ENCODE measurements at regions of chr9 and their contacts with region 1.

Region 1: GRCh38 chr9:112971415-112971814 is 40.6 kb downstream of the ZNF883 start:
- DNase-seq: peak; percentile 50
- ATAC-seq: no peak
- H3K4me3 Mint-ChIP-seq: no peak overlapping the region
- H3K27ac Mint-ChIP-seq: no peak overlapping the region
- H3K4me1 Mint-ChIP-seq: no peaks in the 10 kb centered on the region
- H3K27me3 Mint-ChIP-seq: peaks cover 19% of the 10 kb centered on the region

Region 2: GRCh38 chr9:112844771-112845542 is 126.5 kb before region 1 on chr9:
- CTCF ChIA-PET with region 1: no interaction called
- POLR2A ChIA-PET with region 1: no interaction called
- intact Hi-C with region 1: loop called (anchors 1 to 10 kb)
- DNase-seq: peak; percentile 88
- ATAC-seq: peak; percentile 74
- H3K4me3 Mint-ChIP-seq: no peak overlapping the region
- H3K27ac Mint-ChIP-seq: no peak overlapping the region
- H3K4me1 Mint-ChIP-seq: peaks cover 18% of the 10 kb centered on the region
- H3K27me3 Mint-ChIP-seq: no peaks in the 10 kb centered on the region

Region 3: DNA sequence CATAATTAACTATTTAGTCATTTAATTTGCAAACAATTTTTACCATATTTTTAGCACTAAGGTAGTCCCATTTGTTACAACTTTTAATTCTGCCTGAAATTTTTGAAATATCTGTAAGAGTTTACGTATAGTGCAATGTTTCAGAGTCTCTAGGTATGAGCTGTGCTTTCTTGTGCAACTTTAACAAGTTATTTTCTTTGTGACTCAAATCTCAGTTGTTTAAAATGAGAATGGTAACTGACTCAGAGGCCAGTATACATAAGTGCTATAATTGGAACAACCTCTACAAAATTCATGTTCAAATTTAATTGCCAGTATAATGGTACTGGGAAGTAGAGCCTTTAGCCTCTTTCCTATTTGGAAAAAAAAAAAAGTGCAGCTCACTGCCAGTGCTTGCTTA is 54.8 kb after region 1 on chr9:
- CTCF ChIA-PET with region 1: no interaction called
- POLR2A ChIA-PET with region 1: no interaction called
- intact Hi-C with region 1: loop called in 1 of 2 experiments (anchors 10 kb)
- DNase-seq: no peak
- ATAC-seq: no peak
- H3K4me3 Mint-ChIP-seq: no peak overlapping the region
- H3K27ac Mint-ChIP-seq: no peak overlapping the region
- H3K4me1 Mint-ChIP-seq: no peaks in the 10 kb centered on the region
- H3K27me3 Mint-ChIP-seq: peaks cover 6% of the 10 kb centered on the region

Region 4: DNA sequence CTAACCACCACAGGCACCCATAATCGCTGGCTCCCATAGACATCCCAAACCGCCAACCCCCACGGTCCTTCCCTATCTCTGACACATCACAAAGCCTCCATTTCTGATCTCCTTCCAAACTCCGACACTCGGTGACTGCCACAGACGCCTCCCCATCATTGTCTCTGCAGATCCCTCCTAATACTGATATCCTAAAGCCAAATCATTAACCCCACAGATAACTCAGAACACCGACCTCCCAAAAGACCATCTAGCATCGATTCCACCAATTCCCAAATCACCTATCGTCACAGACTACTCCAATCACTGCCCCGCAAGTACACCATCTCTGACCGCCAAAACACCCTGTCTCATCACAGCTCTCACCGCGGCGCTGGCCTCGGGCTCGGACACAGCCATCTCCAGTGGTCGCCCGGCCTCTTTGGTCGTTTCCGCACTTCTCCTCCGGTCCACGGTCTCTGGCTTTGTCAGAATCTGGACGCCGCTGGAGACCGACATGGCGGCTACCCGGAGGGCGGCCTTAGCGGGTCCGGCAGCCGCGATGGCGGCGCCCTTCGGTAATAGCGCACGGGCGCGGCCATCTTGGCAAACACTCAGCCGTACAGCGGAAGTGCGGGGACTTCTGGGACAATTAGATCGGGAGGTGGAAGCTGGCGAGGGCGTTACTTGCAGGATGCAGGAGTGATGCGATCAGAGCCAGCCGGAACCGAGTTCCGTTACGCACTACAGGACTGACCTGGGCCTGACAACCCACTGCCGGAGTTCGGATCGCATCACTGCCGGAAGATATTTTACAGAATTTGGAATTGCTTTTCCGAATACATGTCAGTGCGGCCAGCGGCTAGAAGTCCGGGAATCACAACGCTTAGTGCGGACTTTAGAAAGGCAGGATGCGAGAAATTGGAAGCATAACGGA is 85.0 kb after region 1 on chr9 and contains the start of gene ZFP37:
- CTCF ChIA-PET with region 1: no interaction called
- POLR2A ChIA-PET with region 1: no interaction called
- intact Hi-C with region 1: no loop called
- DNase-seq: peak; percentile 83
- ATAC-seq: peak; percentile 97
- H3K4me3 Mint-ChIP-seq: no peak within 1 kb of the TSS
- H3K27ac Mint-ChIP-seq: no peak within 1 kb of the TSS
- H3K4me1 Mint-ChIP-seq: no peaks in the 10 kb centered on the region
- H3K27me3 Mint-ChIP-seq: peaks cover 11% of the 10 kb centered on the region
- total RNA-seq, gene ZFP37: 1.0 to 1.5 TPM

Measured in activated CD4-positive, alpha-beta T cell treated with anti-CD3 and anti-CD28 coated beads for 36 hours (primary cell).